Heart right ventricle (tissue), 16 donors: ENCODE measurements at regions of chr22 and their contacts with region 1.

Region 1: DNA sequence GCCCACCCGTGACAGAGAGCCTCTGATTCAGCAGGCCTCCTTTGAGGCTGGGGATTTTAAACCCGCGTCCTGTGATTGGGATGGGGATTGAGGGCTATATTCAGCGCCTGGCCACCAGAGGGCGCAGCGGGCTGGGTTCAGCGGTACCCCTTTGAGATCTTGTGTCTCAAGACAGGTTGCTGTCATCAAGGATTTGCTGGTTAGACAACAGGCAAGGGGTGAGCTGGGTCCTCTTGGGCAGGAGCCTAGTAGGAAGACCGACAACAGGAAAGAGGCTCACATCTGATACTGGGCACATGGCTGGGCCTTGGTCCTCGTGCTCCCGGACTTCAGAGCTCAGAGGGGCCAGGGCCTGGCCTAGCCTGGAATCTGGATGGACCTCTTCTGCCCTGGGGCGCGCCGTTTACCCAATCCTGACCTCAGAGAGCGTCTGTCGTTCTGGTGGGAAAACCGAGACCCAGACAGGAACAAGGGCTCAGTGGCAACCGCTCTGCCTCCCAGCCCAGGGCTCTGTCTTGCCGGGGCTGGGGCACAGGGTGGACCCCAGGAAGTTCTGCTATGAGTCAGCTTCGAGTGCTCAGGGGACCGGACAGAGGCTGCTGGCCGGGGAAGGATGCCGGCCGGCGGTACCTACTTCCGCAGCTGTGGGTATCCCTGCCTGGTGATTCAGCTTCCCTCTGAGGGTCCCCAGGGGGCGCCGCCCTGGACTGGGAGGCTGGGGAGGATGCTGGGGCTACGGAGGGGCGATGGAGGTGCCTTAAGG is 929 bp upstream of the SLC35E4 start:
- DNase-seq: peak; percentile 87 to 89
- ATAC-seq: peak; percentile 68 to 89 (median 80)
- H3K4me3 ChIP-seq: peak overlapping the region; percentile 52 to 91 (median 74)
- H3K27ac ChIP-seq: peak overlapping the region; percentile 60 to 97 (median 90)
- H3K4me1 ChIP-seq: peaks cover 16 to 38% (median 33%) of the 10 kb centered on the region in 9 donors
- H3K27me3 ChIP-seq: no peaks in the 10 kb centered on the region
- CTCF ChIP-seq: peak; percentile 86 to 97 (median 95)

Region 2: GRCh38 chr22:30606455-30607299 is 28.0 kb before region 1 on chr22 and contains the start of gene TCN2:
- intact Hi-C with region 1: loop called in 1 of 10 experiments (anchors 2 kb)
- DNase-seq: peak; percentile 62 to 76
- ATAC-seq: peak; percentile 78 to 91 (median 87)
- H3K4me3 ChIP-seq: peak within 1 kb of the TSS; percentile 29 to 88 (median 66)
- H3K27ac ChIP-seq: peak within 1 kb of the TSS; percentile 65 to 92 (median 84)
- H3K4me1 ChIP-seq: peaks cover 6 to 58% (median 42%) of the 10 kb centered on the region in 9 donors
- H3K27me3 ChIP-seq: no peaks in the 10 kb centered on the region
- CTCF ChIP-seq: peak in 2 of 9 donors; percentile 16 to 19
- total RNA-seq, gene TCN2: 8.9 to 46.8 (median 14.8) TPM

Region 3: DNA sequence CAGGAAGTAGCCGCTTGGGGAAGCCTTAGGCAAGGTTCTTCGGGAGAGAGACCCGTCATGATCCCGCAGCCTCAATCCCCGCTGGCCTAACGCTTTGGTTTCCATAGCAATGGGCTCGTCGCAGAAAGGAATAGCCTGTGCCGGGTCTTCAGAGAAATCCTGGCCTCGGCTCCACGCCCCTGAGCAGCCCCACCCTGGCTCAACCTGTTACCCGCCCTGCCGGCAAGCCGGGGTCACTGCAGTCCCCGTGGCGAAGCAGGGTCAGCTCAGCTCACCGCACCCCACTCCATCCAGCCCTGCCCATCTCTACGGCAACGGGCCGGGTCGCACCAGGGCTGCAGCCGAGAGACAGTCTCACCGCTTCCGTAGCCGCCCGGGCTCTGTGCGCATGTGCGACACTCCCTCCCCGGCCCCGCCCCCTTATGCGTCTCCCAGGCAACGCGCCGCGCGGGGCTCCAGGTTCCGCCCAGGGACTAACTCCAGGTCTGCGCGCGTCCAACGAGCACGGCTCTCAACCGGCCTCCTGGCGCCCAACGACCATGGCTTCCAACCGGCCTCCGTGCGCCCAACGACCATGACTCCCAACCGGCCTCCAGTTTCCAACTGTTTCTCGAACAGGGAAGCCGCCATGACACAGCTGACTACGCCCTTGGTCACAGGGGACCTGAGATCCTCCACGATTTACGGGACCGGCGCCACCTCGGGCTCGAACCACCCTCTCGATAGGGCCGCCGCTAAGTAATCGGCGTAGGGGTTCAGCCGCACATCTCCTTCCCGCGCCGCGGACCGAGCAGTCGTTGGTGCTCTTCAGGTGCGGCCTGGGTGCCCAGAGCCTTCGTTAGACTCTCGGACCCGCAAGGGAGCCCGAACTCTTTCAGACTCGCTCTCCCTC is 33.1 kb after region 1 on chr22 and contains the start of gene DUSP18:
- intact Hi-C with region 1: loop called in 2 of 10 experiments (anchors 1 to 2 kb)
- DNase-seq: peak; percentile 92 to 96
- ATAC-seq: peak; percentile 99 to 100 (median 99)
- H3K4me3 ChIP-seq: peak within 1 kb of the TSS; percentile 54 to 96 (median 86)
- H3K27ac ChIP-seq: peak within 1 kb of the TSS in 7 of 10 donors; percentile 28 to 83 (median 56)
- H3K4me1 ChIP-seq: peaks cover 0 to 22% (median 16%) of the 10 kb centered on the region in 9 donors
- H3K27me3 ChIP-seq: peaks cover 0 to 9% (median 0%) of the 10 kb centered on the region in 7 donors
- CTCF ChIP-seq: peak; percentile 10 to 48 (median 41)
- total RNA-seq, gene DUSP18: 1.5 to 6.3 (median 2.8) TPM

Region 4: DNA sequence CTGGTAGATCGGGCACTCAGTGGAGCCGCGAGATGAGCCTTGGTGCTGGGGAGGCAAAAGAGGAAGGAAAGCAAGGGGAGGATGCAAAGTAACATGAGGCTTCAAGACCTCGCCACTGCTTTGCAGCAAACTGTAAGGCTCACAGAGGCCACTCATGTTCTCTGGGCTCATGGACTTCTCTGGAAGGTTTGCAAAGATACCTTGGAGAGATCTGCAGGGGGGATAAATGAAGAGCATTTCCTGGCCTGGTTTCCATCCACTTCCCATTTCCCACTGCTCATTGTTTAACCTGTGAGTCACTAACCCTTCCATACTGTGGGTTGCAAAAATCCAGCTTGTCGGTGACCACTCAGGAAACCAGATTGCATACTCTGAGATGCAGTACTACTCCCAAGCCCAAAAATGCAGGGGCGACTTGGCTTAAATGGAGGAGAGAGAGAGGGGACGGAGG is 98.6 kb after region 1 on chr22:
- intact Hi-C with region 1: no loop called
- DNase-seq: no peak
- ATAC-seq: no peak
- H3K4me3 ChIP-seq: no peak overlapping the region
- H3K27ac ChIP-seq: no peak overlapping the region
- H3K4me1 ChIP-seq: peaks cover 0 to 6% (median 0%) of the 10 kb centered on the region in 9 donors
- H3K27me3 ChIP-seq: no peaks in the 10 kb centered on the region
- CTCF ChIP-seq: no peak

Region 5: DNA sequence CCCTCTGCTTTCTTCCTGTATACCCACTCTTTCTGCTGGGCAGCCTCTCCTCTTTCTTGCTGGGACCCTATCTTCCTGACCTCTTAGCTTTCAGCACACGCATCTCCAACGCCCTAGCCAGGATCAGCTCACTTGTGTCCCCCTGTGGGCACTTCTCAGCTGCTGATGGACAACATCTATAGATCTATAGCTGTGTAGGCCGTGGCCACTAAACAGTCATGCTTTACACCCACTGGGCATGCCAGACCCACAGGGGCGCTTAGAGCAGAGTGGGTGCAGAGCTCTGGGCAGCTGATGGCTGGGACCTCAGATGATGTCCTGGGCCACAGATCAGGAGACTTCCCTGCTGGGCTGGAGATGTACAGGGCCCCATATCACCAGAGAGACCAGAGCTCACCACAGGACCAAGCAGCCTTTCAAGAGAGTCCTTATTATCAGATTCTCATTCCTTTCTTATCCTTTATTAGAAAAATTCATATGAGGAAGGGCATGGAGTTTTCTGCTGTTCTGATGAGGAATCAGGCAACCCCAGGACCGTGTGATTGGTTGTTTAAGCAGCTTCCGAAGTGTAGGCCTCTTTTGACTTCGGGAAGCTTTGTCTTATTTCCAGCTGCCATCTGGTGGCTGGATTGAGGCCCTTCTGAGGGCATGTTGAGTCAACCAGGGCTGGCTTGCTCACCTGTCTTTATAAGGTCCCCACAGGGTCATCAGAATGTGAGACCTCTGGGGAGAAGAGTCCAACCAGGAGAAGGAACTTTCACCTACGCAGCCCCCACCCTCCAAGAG is 120.5 kb after region 1 on chr22:
- intact Hi-C with region 1: loop called (anchors 1 to 5 kb)
- DNase-seq: peak in 1 of 2 donors; percentile 29
- ATAC-seq: peak; percentile 68 to 88 (median 78)
- H3K4me3 ChIP-seq: no peak overlapping the region
- H3K27ac ChIP-seq: no peak overlapping the region
- H3K4me1 ChIP-seq: peaks cover 0 to 3% (median 0%) of the 10 kb centered on the region in 9 donors
- H3K27me3 ChIP-seq: no peaks in the 10 kb centered on the region
- CTCF ChIP-seq: peak; percentile 39 to 78 (median 64)

Region 6: DNA sequence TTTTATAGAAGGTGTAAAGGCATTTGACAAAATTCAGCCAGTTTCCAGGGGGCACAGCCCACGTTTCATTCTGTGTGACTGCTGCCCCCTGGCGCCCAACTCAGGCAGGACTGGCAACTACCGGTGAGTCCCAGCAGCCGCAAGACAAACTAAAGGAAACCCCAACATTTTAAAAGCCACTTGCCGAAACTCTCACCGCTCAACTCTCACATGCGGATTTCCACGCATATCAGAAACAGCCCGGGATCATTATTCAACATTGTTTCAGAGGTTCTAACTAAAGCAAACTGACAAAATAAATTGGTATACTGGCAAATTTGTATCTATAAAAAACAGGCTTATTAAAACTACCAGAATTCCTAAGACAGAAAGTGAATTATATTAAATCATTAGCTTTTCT is 285.8 kb after region 1 on chr22:
- intact Hi-C with region 1: loop called in 9 of 10 experiments (anchors 1 to 10 kb)
- DNase-seq: peak; percentile 76 to 84
- ATAC-seq: peak in 6 of 8 donors; percentile 42 to 81 (median 64)
- H3K4me3 ChIP-seq: peak overlapping the region in 1 of 10 donors; percentile 19
- H3K27ac ChIP-seq: no peak overlapping the region
- H3K4me1 ChIP-seq: peaks cover 0 to 20% (median 11%) of the 10 kb centered on the region in 9 donors
- H3K27me3 ChIP-seq: no peaks in the 10 kb centered on the region
- CTCF ChIP-seq: peak; percentile 85 to 96 (median 92)